Activated CD4-positive, alpha-beta T cell treated with anti-CD3 and anti-CD28 coated beads, Interleukin-2, amount 10 ng/mL, durations not matched to agents 24 days and 14 days (primary cell): ENCODE measurements at regions of chr9 and their contacts with region 1.

Region 1: DNA sequence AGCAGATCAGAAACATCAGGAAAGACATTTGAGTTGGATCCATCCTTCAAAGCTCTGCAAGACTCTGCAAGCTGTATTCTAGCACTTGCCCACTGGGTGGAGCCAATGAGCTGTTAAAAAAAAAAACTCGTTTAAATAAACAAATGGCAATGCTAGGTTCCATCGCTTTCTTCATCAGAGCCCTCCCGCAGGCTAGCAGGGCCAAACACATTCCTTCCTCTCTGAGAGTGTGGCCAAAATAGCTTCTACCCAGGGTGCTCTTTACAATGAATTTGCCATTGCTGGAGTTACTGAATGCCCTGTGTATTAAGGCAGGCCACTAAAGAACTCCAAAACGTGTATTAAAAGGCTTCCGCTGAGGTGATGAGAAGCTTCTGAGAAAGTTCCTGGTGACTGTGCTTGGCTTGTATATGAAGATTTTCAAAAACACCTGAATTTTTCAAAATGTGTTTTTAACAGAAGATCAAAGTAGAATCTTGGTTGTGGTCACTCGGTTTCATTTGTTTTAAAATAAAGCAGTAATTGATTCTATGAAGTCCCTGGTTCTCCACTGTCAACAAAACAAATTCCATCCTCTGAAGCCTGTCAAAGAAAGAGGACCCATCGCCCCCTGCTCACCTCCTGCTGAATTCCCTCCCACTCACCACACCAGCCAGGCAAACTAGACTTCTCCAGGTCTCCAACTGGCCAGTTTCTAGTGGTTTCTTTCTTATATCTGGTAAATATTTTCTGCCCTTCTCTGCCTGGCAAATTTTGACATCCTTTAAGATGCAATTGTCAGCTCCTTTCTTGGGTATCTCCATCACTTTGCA is 36.5 kb upstream of the EQTN start:
- DNase-seq: peak; percentile 89
- H3K4me3 Mint-ChIP-seq: no peak overlapping the region
- H3K27ac Mint-ChIP-seq: no peak overlapping the region
- H3K4me1 Mint-ChIP-seq: peaks cover 3% of the 10 kb centered on the region
- H3K27me3 Mint-ChIP-seq: peaks cover 5% of the 10 kb centered on the region

Region 2: GRCh38 chr9:27427273-27427645 is 93.8 kb after region 1 on chr9:
- intact Hi-C with region 1: no loop called
- DNase-seq: no peak
- H3K4me3 Mint-ChIP-seq: no peak overlapping the region
- H3K27ac Mint-ChIP-seq: no peak overlapping the region
- H3K4me1 Mint-ChIP-seq: peaks cover 8% of the 10 kb centered on the region
- H3K27me3 Mint-ChIP-seq: no peaks in the 10 kb centered on the region

Region 3: DNA sequence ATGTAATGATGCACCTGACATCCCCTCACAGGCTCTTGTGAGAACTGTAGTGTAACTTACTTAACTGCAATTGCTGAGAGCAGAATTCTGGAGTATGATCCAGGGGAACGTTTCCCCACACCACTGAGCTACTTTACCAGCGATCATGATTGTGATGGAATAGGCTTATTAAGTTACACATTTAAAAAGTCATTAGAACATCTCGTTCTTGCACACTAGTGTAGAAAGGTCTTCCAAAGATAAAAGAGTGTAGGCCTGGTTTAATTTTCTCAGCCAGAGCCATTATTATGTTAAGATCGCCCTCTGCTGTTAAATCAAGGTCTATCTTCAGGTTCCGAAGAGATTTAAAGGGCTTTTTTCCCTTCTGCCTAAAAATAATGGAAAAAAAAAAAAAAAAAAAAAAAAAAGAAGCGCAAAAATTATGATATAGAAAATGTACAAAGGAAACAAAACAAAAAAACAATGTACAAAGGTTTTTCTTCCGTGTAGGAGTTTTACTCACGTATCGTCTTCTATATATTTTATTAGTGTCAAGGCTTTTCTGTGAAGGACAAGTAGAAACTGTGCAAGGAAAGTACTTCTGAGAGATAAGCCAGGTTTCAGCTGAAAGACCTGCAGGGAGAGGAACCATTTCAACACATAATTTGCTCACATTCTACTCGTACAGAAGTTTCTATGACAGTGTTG is 214.8 kb after region 1 on chr9:
- intact Hi-C with region 1: loop called (anchors 1 kb)
- DNase-seq: peak; percentile 59
- H3K4me3 Mint-ChIP-seq: no peak overlapping the region
- H3K27ac Mint-ChIP-seq: no peak overlapping the region
- H3K4me1 Mint-ChIP-seq: no peaks in the 10 kb centered on the region
- H3K27me3 Mint-ChIP-seq: no peaks in the 10 kb centered on the region

Region 4: GRCh38 chr9:27714388-27714787 is 380.9 kb after region 1 on chr9:
- intact Hi-C with region 1: loop called (anchors 5 kb)
- DNase-seq: no peak
- H3K4me3 Mint-ChIP-seq: no peak overlapping the region
- H3K27ac Mint-ChIP-seq: no peak overlapping the region
- H3K4me1 Mint-ChIP-seq: no peaks in the 10 kb centered on the region
- H3K27me3 Mint-ChIP-seq: peaks cover 2% of the 10 kb centered on the region